ENCODE measurements at regions of chr6 and their contacts with region 1.

Region 1: GRCh38 chr6:29705389-29706231 is 17.6 kb upstream of the HLA-F start:
- DNase-seq: peak in 1 of 2 experiments; percentile 47
- H3K4me3 ChIP-seq: no peak overlapping the region
- H3K27ac ChIP-seq: no peak overlapping the region
- H3K4me1 ChIP-seq: no peaks in the 10 kb centered on the region
- H3K27me3 ChIP-seq: peaks cover 11% of the 10 kb centered on the region; the same call in 1 of the 2 replicates
- CTCF ChIP-seq: peak; percentile 74

Region 2: GRCh38 chr6:29734046-29735018 is 28.7 kb after region 1 on chr6:
- CTCF ChIA-PET with region 1: no interaction called
- POLR2A ChIA-PET with region 1: no interaction called
- intact Hi-C with region 1: no loop called
- DNase-seq: peak in 1 of 2 experiments; percentile 25
- H3K4me3 ChIP-seq: no peak overlapping the region
- H3K27ac ChIP-seq: no peak overlapping the region
- H3K4me1 ChIP-seq: no peaks in the 10 kb centered on the region
- H3K27me3 ChIP-seq: no peaks in the 10 kb centered on the region
- CTCF ChIP-seq: no peak

Region 3: GRCh38 chr6:29834564-29835436 is 129.2 kb after region 1 on chr6:
- CTCF ChIA-PET with region 1: no interaction called
- POLR2A ChIA-PET with region 1: no interaction called
- intact Hi-C with region 1: loop called (anchors 1 kb)
- DNase-seq: peak in 1 of 2 experiments; percentile 56
- H3K4me3 ChIP-seq: no peak overlapping the region
- H3K27ac ChIP-seq: no peak overlapping the region
- H3K4me1 ChIP-seq: no peaks in the 10 kb centered on the region
- H3K27me3 ChIP-seq: peaks cover 5% of the 10 kb centered on the region; the same call in 1 of the 2 replicates
- CTCF ChIP-seq: peak; percentile 93

Region 4: DNA sequence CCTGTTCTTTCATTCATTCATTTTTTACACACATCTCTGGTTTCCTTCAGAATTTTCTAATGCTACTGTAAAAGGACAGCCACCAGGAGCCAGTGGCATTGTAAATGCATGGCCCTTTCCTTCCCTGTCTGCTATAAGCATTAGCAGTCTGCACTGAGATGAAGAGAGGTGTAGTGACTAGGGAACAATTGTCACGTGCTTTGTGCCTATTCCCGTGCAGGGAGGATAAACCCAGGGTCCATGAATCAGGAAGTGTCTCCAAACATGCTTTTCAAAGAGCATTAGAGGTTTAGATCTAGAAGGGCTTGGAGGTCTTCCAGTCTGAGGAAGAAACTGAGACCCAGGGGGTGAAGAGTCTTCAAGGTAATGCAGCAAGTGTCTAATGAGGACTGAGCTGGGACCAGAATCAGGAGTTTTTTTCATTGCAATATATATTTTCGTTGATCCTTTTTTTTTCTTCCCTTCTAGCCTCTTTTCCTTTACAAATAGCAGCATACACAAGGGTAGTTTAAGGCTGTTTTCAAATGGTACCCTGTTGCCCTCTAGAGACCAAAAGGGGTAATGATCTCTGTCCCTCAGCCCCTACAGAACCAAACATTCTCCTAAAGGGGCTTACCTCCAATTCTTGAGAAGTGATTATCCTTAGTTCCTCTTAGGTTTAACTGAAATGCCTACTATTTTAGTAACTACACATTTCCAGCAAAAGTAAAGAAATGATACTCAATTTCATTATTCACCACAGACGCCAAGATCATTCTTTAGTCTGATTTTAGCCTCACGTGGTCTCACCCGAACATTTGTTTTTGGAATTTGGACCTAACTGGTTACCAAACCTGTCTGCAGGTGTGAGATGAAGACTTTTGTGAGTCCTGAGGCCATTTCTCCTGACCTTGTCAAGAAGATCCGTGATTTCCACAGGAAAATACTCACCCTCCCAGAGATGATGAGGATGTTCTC is 464.3 kb after region 1 on chr6:
- CTCF ChIA-PET with region 1: no interaction called
- POLR2A ChIA-PET with region 1: no interaction called
- intact Hi-C with region 1: loop called (anchors 1 kb)
- DNase-seq: peak; percentile 11 to 51
- H3K4me3 ChIP-seq: no peak overlapping the region
- H3K27ac ChIP-seq: no peak overlapping the region
- H3K4me1 ChIP-seq: no peaks in the 10 kb centered on the region
- H3K27me3 ChIP-seq: peaks cover 28% of the 10 kb centered on the region
- CTCF ChIP-seq: peak; percentile 87